Dorsolateral prefrontal cortex (tissue), 120 donors: ENCODE measurements at regions of chr19 and their contacts with region 1.

Region 1: GRCh38 chr19:44164673-44165512 is at the start of gene ZNF226:
- DNase-seq: peak; percentile 83 to 99 (median 95)
- H3K4me3 ChIP-seq: peak within 1 kb of the TSS; percentile 46 to 97 (median 84)
- H3K27ac ChIP-seq: peak within 1 kb of the TSS; percentile 51 to 96 (median 90)
- H3K27me3 ChIP-seq: no peaks in the 10 kb centered on the region
- CTCF ChIP-seq: peak in 33 of 56 donors; percentile 5 to 45 (median 27)
- total RNA-seq, gene ZNF226: 33.2 to 72.4 (median 51.4) TPM

Region 2: DNA sequence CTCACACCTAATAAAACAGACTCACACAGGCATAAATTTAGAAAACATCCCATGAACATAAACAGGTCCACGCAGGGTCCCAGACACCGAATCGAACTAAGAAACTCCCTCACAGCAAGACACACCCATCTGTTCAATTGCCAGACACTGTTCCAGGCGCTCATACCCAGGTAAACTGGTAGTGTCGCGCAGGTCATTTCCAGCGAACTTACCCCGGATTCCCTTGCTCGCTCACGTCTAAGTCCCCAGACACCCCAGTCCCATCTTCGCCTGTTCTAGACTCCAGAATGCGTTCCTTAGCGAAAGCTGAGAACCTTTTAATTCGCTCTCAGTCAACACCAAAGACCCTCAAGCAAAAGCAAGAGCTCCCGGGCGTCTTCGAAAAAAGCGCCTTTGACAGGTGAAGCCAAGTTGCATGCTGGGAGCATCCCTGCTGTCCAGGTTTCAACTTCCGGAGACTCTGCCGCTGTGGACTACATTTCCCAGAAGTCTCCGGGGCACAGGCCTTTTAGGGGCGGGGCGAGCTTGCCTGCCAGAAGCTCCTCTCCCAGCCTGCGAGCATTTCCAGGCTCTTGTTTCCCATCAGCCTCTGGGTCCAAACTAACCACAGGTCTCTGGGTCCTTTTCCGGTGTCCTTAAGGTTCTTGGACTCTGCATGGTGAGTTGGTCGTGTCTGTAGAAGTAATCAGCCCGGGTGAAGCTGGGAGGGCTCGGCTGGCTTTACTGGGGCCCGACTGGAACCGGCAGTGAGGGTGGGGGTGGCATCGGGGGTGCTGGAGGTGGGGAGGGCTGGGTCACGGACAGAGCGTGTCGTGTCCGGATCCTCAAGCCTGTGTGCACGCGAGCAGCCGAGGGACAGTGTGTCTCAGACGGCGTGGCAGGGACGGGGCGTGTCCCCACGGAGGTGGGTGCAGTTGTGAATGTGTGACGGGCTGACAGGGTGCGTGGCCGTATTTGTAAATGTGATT is 337.8 kb before region 1 on chr19 and contains the start of gene ZNF283:
- intact Hi-C with region 1: loop called in 1 of 2 experiments (anchors 5 kb)
- DNase-seq: peak; percentile 78 to 95 (median 94)
- H3K4me3 ChIP-seq: peak within 1 kb of the TSS; percentile 50 to 86 (median 76)
- H3K27ac ChIP-seq: peak within 1 kb of the TSS in 36 of 59 donors; percentile 3 to 78 (median 48)
- H3K27me3 ChIP-seq: no peaks in the 10 kb centered on the region
- CTCF ChIP-seq: peak in 22 of 56 donors; percentile 11 to 43 (median 24)
- total RNA-seq, gene ZNF283: 17.2 to 43.0 (median 24.6) TPM

Region 3: GRCh38 chr19:44002566-44003460 is 162.1 kb before region 1 on chr19 and contains the start of gene ZNF230:
- intact Hi-C with region 1: loop called in 1 of 2 experiments (anchors 10 kb)
- DNase-seq: peak; percentile 85 to 97 (median 94)
- H3K4me3 ChIP-seq: peak within 1 kb of the TSS; percentile 59 to 98 (median 88)
- H3K27ac ChIP-seq: peak within 1 kb of the TSS in 48 of 59 donors; percentile 10 to 90 (median 67)
- H3K27me3 ChIP-seq: no peaks in the 10 kb centered on the region
- CTCF ChIP-seq: peak in 16 of 56 donors; percentile 11 to 43 (median 30)
- total RNA-seq, gene ZNF230: 2.7 to 11.5 (median 6.4) TPM

Region 4: DNA sequence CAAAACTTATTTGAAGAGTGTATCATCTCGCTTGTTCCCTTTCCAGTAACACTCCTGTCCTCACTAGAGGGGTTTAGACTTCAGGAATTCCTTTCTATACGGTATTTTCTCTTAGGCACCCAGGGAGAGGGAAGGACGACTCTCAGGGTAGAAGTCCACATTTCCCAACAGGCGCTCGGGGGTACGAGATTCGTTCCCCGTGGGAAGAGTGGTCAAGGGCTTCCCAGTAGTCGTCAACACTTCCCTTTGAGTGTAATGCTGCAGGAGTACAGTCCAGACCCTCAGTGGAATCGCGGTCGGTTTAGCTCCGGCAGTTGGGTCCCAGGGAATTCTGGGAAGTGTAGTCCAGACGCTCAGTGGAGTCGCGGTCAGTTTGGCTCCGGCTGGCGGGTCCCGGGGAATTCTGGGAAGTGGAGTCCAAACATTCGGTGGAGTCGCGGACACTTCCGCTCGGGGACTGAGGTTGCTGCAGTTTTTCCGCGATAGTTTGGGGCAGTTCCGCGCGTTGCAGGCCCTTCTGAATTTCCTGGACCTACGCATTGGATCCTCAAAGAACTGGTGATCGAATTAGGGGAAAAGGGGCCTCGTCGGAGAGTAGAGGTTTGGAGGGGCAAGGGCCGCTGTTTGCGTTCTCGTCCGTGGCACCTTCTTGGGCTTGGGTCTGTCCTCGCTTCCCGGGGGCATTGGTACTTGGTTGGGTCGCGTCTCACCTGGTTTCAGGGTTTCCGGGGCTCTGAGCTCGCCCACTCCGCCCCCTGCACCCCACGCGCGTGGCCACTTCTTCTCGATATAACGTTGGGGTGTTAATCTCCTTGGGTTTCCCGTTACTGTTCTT is 70.7 kb before region 1 on chr19 and contains the start of gene ZNF224:
- intact Hi-C with region 1: loop called in 1 of 2 experiments (anchors 1 kb)
- DNase-seq: peak; percentile 89 to 95 (median 94)
- H3K4me3 ChIP-seq: peak within 1 kb of the TSS; percentile 53 to 96 (median 85)
- H3K27ac ChIP-seq: peak within 1 kb of the TSS in 50 of 59 donors; percentile 1 to 87 (median 68)
- H3K27me3 ChIP-seq: no peaks in the 10 kb centered on the region
- CTCF ChIP-seq: peak in 23 of 56 donors; percentile 8 to 46 (median 25)
- total RNA-seq, gene ZNF224: 25.6 to 58.3 (median 42.2) TPM

Region 5: DNA sequence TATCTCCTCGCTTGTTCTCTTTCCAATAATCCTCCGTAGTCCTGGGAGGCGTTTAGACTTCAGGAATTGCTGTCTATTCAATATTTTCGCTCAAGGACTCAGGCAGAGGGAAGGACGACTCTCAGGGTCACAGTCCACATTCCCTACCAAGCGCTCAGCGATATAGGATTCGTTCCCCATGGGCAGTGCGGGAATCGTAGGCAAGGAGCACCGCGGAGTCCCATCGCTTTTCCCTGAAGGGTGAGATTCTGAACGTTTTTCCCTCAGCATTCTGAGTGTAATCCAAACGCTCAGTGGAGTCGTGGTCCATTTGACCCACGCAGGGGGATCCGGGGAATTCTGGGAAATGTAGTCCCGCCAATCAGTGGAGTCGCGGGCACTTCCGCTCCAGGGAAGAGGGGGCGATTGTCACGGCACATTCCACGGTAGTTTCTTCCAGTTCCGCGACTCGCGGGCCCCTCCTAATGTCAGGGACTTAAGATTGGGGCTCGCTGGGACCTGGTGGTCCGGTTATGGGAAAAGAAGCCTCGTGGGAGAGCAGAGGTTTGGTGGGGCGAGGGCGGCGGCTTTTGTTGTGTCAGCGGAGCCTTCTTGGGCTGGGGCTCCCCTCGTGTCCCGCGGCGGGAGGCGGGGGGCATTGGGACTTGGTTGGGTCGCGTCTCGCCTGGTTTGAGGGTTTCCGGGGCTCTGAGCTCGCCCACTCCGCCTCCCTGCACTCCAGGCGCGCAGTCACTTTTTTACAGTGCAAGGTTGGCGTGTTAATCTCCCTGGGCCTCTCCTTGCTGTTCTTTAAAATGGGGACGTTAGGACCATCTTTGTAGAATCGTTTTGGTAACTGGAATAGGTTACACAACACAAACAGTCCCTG is 23.5 kb before region 1 on chr19 and contains the start of gene ZNF234:
- intact Hi-C with region 1: loop called in 1 of 2 experiments (anchors 2 kb)
- DNase-seq: peak; percentile 78 to 93 (median 89)
- H3K4me3 ChIP-seq: peak within 1 kb of the TSS; percentile 68 to 99 (median 92)
- H3K27ac ChIP-seq: peak within 1 kb of the TSS in 52 of 59 donors; percentile 1 to 88 (median 76)
- H3K27me3 ChIP-seq: no peaks in the 10 kb centered on the region
- CTCF ChIP-seq: peak in 21 of 56 donors; percentile 1 to 34 (median 17)
- total RNA-seq, gene ZNF234: 8.8 to 27.0 (median 15.6) TPM

Region 6: GRCh38 chr19:44228318-44228717 is 63.4 kb after region 1 on chr19:
- intact Hi-C with region 1: no loop called
- DNase-seq: no peak
- H3K4me3 ChIP-seq: no peak overlapping the region
- H3K27ac ChIP-seq: no peak overlapping the region
- H3K27me3 ChIP-seq: no peaks in the 10 kb centered on the region
- CTCF ChIP-seq: no peak

Region 7: GRCh38 chr19:44304659-44305193 is 139.8 kb after region 1 on chr19 and contains the start of gene ZNF235:
- intact Hi-C with region 1: loop called in 1 of 2 experiments (anchors 10 kb)
- DNase-seq: peak; percentile 77 to 95 (median 92)
- H3K4me3 ChIP-seq: peak within 1 kb of the TSS; percentile 63 to 99 (median 89)
- H3K27ac ChIP-seq: peak within 1 kb of the TSS in 48 of 59 donors; percentile 2 to 89 (median 60)
- H3K27me3 ChIP-seq: no peaks in the 10 kb centered on the region
- CTCF ChIP-seq: peak in 17 of 56 donors; percentile 10 to 43 (median 25)
- total RNA-seq, gene ZNF235: 8.6 to 20.5 (median 14.1) TPM